Aorta (tissue), 5 donors: ENCODE measurements at regions of chr12 and their contacts with region 1.

Region 1: GRCh38 chr12:76348079-76348901 is at the start of gene BBS10:
- DNase-seq: peak; percentile 96
- ATAC-seq: peak; percentile 96
- H3K4me3 ChIP-seq: peak within 1 kb of the TSS; percentile 72 to 83
- H3K27ac ChIP-seq: peak within 1 kb of the TSS in 1 of 2 donors; percentile 93
- H3K4me1 ChIP-seq: peaks cover 0 to 3% of the 10 kb centered on the region in 2 donors
- H3K27me3 ChIP-seq: no peaks in the 10 kb centered on the region
- total RNA-seq, gene BBS10: 6.7 to 8.9 TPM

Region 2: GRCh38 chr12:76455582-76456345 is 107.5 kb after region 1 on chr12:
- intact Hi-C with region 1: loop called in 1 of 2 experiments (anchors 10 kb)
- DNase-seq: no peak
- ATAC-seq: peak; percentile 73
- H3K4me3 ChIP-seq: no peak overlapping the region
- H3K27ac ChIP-seq: no peak overlapping the region
- H3K4me1 ChIP-seq: no peaks in the 10 kb centered on the region
- H3K27me3 ChIP-seq: no peaks in the 10 kb centered on the region

Region 3: GRCh38 chr12:76559400-76560085 is 211.3 kb after region 1 on chr12 and contains the start of gene OSBPL8:
- intact Hi-C with region 1: loop called in 1 of 2 experiments (anchors 10 kb)
- DNase-seq: peak; percentile 97 to 99
- ATAC-seq: peak; percentile 99
- H3K4me3 ChIP-seq: peak within 1 kb of the TSS; percentile 68 to 94
- H3K27ac ChIP-seq: peak within 1 kb of the TSS; percentile 8 to 84
- H3K4me1 ChIP-seq: no peaks in the 10 kb centered on the region
- H3K27me3 ChIP-seq: no peaks in the 10 kb centered on the region
- total RNA-seq, gene OSBPL8: 77.8 to 100 TPM